ENCODE measurements at regions of chr4 and their contacts with region 1.

Region 1: GRCh38 chr4:77618383-77619122 is 12.9 kb downstream of the CXCL13 start:
- DNase-seq: peak; percentile 77
- ATAC-seq: peak; percentile 94

Region 2: GRCh38 chr4:77385124-77385969 is 233.2 kb before region 1 on chr4:
- intact Hi-C with region 1: loop called (anchors 10 kb)
- DNase-seq: peak; percentile 72
- ATAC-seq: peak; percentile 75

Region 3: GRCh38 chr4:77564231-77564630 is 54.3 kb before region 1 on chr4:
- intact Hi-C with region 1: no loop called
- DNase-seq: no peak
- ATAC-seq: peak; percentile 88

Region 4: GRCh38 chr4:77833126-77833724 is 214.7 kb after region 1 on chr4:
- intact Hi-C with region 1: no loop called
- DNase-seq: no peak
- ATAC-seq: no peak